HEK293 (cell line): ENCODE measurements at regions of chr22 and their contacts with region 1.

Region 1: GRCh38 chr22:36481393-36482168 is at the start of gene TXN2:
- H3K4me3 ChIP-seq: peak within 1 kb of the TSS; percentile 49
- H3K27ac ChIP-seq: peak within 1 kb of the TSS; percentile 95
- H3K4me1 ChIP-seq: no peaks in the 10 kb centered on the region; the same call in 1 of the 2 replicates
- CTCF ChIP-seq: no peak

Region 2: GRCh38 chr22:36445158-36445668 is 36.4 kb before region 1 on chr22:
- CTCF ChIA-PET with region 1: no interaction called
- POLR2A ChIA-PET with region 1: no interaction called
- H3K4me3 ChIP-seq: no peak overlapping the region
- H3K27ac ChIP-seq: no peak overlapping the region
- H3K4me1 ChIP-seq: no peaks in the 10 kb centered on the region
- CTCF ChIP-seq: no peak

Region 3: DNA sequence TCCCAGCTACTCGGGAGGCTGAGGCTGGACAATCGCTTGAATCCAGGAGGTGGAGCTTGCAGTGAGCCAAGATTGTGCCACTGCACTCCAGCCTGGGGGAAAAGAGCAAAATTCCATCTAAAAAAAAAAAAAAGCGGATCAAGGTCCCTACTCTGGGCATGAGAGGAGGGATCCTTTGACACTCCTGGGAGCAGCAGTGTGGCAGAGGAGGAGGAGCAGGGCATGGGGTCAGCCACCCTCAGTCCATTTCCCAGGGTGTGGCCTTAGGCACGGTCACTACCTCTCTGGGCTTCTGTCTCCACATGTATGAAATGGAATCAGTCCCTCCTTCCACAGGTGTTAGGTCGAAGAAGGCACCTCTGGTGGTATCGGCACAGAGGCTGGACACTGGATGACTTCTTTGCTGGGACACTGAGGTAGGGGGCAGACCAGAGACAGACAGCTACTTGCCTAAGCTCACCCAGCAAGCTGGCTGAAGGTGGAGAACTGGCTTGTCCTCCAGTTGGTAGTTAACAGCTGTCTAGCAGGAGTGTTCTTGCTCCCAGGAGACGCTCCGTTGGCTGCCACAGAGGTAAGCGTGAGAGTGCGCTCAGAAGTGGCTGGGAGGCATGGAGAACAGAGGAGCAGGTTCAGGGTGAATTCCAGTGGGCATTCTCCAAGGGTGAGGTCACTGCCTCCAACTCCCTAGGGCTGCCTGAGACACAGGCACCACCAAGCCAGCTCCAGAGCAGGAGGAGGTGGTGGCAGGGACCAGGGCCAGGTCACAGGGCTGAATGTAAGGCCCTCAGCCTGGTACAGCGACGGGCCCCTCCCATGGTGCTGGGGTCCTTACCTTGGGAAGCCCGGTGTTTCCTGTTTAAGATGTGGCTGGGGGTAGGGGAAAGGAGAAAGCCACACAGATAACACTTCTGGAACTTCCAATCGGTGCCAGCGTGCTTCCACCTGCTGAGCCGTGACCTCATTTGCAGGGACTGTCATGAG is 19.6 kb before region 1 on chr22:
- CTCF ChIA-PET with region 1: interaction called, 8 read pairs
- POLR2A ChIA-PET with region 1: interaction called, 15 read pairs
- H3K4me3 ChIP-seq: no peak overlapping the region
- H3K27ac ChIP-seq: peak overlapping the region; percentile 8; the same call in 1 of the 2 replicates
- H3K4me1 ChIP-seq: peaks cover 18% of the 10 kb centered on the region
- CTCF ChIP-seq: no peak

Region 4: GRCh38 chr22:36493690-36494110 is 12.1 kb after region 1 on chr22:
- CTCF ChIA-PET with region 1: interaction called, 5 read pairs
- POLR2A ChIA-PET with region 1: interaction called, 17 read pairs
- H3K4me3 ChIP-seq: no peak overlapping the region
- H3K27ac ChIP-seq: no peak overlapping the region
- H3K4me1 ChIP-seq: no peaks in the 10 kb centered on the region
- CTCF ChIP-seq: no peak

Region 5: DNA sequence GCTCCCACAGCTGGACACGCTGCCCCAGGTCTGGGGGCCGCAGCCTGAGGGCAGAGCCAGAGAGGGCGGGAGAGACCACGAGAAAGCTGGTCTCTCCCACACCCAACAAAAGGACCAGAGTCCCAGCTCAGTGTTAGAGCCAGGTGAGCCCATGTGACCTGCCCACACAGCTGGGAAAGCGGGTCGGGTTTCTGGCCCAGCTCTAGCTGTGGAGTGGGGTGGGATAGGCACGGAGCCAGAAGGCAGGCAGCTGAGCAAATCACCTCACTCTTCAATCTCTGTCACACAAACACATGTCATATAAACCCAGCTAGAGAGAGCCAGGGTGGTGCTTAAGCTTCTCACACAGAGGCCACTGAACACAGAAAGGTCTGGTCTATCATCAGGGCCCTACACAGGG is 55.1 kb after region 1 on chr22:
- CTCF ChIA-PET with region 1: no interaction called
- POLR2A ChIA-PET with region 1: no interaction called
- H3K4me3 ChIP-seq: no peak overlapping the region
- H3K27ac ChIP-seq: no peak overlapping the region
- H3K4me1 ChIP-seq: no peaks in the 10 kb centered on the region
- CTCF ChIP-seq: no peak